SK-MEL-5 (cell line): ENCODE measurements at regions of chr12 and their contacts with region 1.

Region 1: DNA sequence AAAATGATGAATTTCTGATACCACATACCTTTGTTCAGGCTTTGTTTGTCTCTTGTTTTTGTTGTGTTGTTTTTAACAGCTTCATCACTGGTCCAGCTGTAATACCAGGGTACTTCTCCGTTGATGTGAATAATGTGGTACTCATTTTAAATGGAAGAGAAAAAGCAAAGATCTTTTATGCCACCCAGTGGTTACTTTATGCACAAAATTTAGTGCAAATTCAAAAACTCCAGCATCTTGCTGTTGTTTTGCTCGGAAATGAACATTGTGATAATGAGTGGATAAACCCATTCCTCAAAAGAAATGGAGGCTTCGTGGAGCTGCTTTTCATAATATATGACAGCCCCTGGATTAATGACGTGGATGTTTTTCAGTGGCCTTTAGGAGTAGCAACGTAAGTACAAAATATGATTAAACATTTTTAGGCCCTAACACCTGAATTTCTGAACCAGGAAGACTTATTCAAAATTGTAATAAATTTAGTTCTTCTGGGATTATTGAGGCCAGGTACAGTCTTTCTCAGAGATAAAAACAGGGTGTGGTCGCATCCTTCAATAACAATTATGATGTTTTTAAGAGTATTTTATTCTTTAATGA is 22.4 kb downstream of the RXYLT1 start:
- DNase-seq: peak; percentile 68

Region 2: GRCh38 chr12:63420206-63420644 is 381.9 kb before region 1 on chr12:
- in situ Hi-C with region 1: loop called (anchors 25 kb)
- DNase-seq: peak; percentile 88

Region 3: GRCh38 chr12:64256166-64256800 is 454.2 kb after region 1 on chr12:
- in situ Hi-C with region 1: loop called (anchors 25 kb)
- DNase-seq: peak; percentile 82